ENCODE measurements at regions of chr7 and their contacts with region 1.

Region 1: DNA sequence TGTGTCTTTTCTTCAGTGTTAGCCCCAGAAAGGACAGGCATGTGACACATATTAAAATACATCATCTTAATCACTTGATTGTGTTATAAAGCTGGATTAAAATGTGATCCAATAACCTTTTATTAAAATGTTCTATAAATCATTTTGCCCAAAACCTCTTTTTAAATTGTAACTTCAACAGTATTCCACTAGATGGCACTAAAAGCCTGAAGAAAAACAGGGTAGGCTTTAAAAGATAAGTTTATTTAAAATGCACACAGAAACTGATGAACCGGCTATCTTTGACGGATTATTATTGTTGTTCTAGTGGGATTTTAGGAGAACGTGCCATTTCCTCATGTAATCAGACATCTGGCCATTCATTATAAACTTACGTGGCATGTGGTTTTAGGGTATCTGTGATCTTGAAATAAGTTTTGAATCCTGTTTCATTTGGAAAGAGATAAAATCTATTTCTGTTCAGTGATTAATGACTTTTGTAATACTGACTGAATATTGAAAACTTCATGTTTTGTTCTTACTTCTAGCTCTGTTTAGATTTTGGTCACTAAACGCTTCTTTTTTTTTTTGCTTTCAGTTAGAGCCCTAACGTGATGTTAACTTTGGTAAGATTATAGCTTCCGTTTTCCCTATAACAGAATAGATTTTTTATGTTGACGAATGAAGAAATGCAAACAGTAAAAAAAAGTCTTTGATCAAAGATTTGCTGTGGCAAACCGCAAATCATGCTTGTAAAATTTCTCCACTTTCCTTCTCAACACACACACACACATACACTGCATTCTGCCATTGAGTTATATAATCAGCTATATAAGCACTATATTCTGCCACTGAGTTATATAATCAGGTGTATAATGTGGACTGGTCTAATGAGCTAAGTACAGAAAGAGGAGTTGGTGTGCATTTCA is 13.6 kb downstream of the VPS50 start:
- DNase-seq: no peak
- H3K4me3 ChIP-seq: peak overlapping the region in 1 of 4 donors; percentile 33
- H3K27ac ChIP-seq: no peak overlapping the region
- H3K4me1 ChIP-seq: peaks cover 0 to 14% of the 10 kb centered on the region in 2 donors
- H3K27me3 ChIP-seq: no peaks in the 10 kb centered on the region
- CTCF ChIP-seq: peak; percentile 51 to 77 (median 69)
- POLR2A ChIP-seq: no peak

Region 2: GRCh38 chr7:93374345-93374940 is 128.7 kb after region 1 on chr7:
- intact Hi-C with region 1: loop called in 1 of 2 experiments (anchors 10 kb)
- DNase-seq: no peak
- H3K4me3 ChIP-seq: no peak overlapping the region
- H3K27ac ChIP-seq: no peak overlapping the region
- H3K4me1 ChIP-seq: no peaks in the 10 kb centered on the region
- H3K27me3 ChIP-seq: no peaks in the 10 kb centered on the region
- CTCF ChIP-seq: peak; percentile 57 to 81 (median 63)
- POLR2A ChIP-seq: no peak

Region 3: GRCh38 chr7:93551063-93551904 is 305.5 kb after region 1 on chr7:
- intact Hi-C with region 1: loop called in 1 of 2 experiments (anchors 5 kb)
- DNase-seq: peak in 2 of 7 donors; percentile 24 to 27
- H3K4me3 ChIP-seq: no peak overlapping the region
- H3K27ac ChIP-seq: no peak overlapping the region
- H3K4me1 ChIP-seq: no peaks in the 10 kb centered on the region
- H3K27me3 ChIP-seq: no peaks in the 10 kb centered on the region
- CTCF ChIP-seq: peak; percentile 30 to 53 (median 44)
- POLR2A ChIP-seq: no peak

Measured in adrenal gland (tissue), 19 donors.